Activated T-helper 2 cell treated with anti-CD3 and anti-CD28 coated beads, Interferon-gamma antibody, Interleukin-2, Interleukin-4, amounts not matched to agents 10 μg/mL and 5 μg/mL and 100 μg/mL, durations not matched to agents 14 hours and 24 hours and 36 hours (primary cell): ENCODE measurements at regions of chr7 and their contacts with region 1.

Region 1: GRCh38 chr7:96495751-96496216 is 173.9 kb upstream of the SLC25A13 start:
- DNase-seq: peak; percentile 20
- H3K4me3 Mint-ChIP-seq: peak overlapping the region; percentile 62
- H3K27ac Mint-ChIP-seq: peak overlapping the region; percentile 92
- H3K4me1 Mint-ChIP-seq: peaks cover 27% of the 10 kb centered on the region
- H3K27me3 Mint-ChIP-seq: peaks cover 9% of the 10 kb centered on the region

Region 2: GRCh38 chr7:96479015-96479645 is 16.7 kb before region 1 on chr7:
- intact Hi-C with region 1: loop called (anchors 2 kb)
- DNase-seq: no peak
- H3K4me3 Mint-ChIP-seq: peak overlapping the region; percentile 27
- H3K27ac Mint-ChIP-seq: peak overlapping the region; percentile 81
- H3K4me1 Mint-ChIP-seq: peaks cover 23% of the 10 kb centered on the region
- H3K27me3 Mint-ChIP-seq: peaks cover 7% of the 10 kb centered on the region